Activated T-helper 2 cell treated with anti-CD3 and anti-CD28 coated beads, Interferon-gamma antibody, Interleukin-2, Interleukin-4, amounts not matched to agents 10 μg/mL and 5 μg/mL and 100 μg/mL, durations not matched to agents 14 hours and 24 hours and 36 hours (primary cell): ENCODE measurements at regions of chr6 and their contacts with region 1.

Region 1: GRCh38 chr6:129567374-129567773 is 142.6 kb downstream of the ARHGAP18 start:
- DNase-seq: no peak
- H3K4me3 Mint-ChIP-seq: no peak overlapping the region
- H3K27ac Mint-ChIP-seq: no peak overlapping the region
- H3K4me1 Mint-ChIP-seq: no peaks in the 10 kb centered on the region
- H3K27me3 Mint-ChIP-seq: peaks cover 18% of the 10 kb centered on the region

Region 2: DNA sequence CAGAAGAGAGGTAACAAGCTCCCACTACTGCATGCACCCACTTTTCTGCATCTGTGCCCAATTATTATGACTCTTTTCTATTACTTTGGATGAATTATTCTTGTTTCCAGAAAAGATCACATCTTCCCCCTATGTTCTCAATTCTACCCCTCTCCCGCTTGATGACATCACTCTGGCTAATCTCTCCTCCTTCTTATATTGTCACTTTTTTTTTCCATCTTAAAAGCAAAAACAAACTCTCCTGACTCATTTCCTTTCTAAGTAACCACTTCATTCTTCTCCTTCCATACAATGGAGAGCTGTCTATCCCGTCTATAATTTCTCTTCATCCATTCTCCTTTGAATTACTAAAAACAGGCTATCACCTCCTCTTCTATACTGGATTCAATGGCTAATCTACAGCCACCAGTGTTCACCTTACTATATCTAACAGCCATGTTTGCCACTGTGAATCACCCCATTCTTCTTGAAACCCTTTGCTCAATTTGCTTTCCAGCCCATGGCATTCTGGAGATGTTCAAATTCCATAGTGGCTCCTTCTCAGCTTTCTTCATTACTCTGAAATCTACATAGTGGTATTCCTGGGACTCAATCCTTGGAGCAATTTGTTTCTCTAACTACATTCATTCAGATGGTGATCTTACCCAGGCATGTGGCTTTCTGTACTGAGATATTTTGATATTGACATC is 235.8 kb before region 1 on chr6:
- intact Hi-C with region 1: no loop called
- DNase-seq: no peak
- H3K4me3 Mint-ChIP-seq: no peak overlapping the region
- H3K27ac Mint-ChIP-seq: no peak overlapping the region
- H3K4me1 Mint-ChIP-seq: no peaks in the 10 kb centered on the region
- H3K27me3 Mint-ChIP-seq: no peaks in the 10 kb centered on the region

Region 3: GRCh38 chr6:129370268-129370916 is 197.0 kb before region 1 on chr6:
- intact Hi-C with region 1: loop called (anchors 10 kb)
- DNase-seq: peak; percentile 11
- H3K4me3 Mint-ChIP-seq: no peak overlapping the region
- H3K27ac Mint-ChIP-seq: no peak overlapping the region
- H3K4me1 Mint-ChIP-seq: peaks cover 8% of the 10 kb centered on the region
- H3K27me3 Mint-ChIP-seq: peaks cover 5% of the 10 kb centered on the region

Region 4: GRCh38 chr6:129498950-129499842 is 68.2 kb before region 1 on chr6:
- intact Hi-C with region 1: loop called (anchors 1 kb)
- DNase-seq: no peak
- H3K4me3 Mint-ChIP-seq: peak overlapping the region; percentile 36
- H3K27ac Mint-ChIP-seq: peak overlapping the region; percentile 0
- H3K4me1 Mint-ChIP-seq: peaks cover 48% of the 10 kb centered on the region
- H3K27me3 Mint-ChIP-seq: no peaks in the 10 kb centered on the region